Gastrocnemius medialis (tissue), 4 donors: ENCODE measurements at regions of chr9 and their contacts with region 1.

Region 1: GRCh38 chr9:134067904-134068743 is at the start of gene BRD3:
- DNase-seq: peak; percentile 74 to 84
- ATAC-seq: peak; percentile 80 to 84
- H3K4me3 ChIP-seq: peak within 1 kb of the TSS; percentile 60 to 89 (median 78)
- H3K27ac ChIP-seq: peak within 1 kb of the TSS; percentile 89 to 99 (median 98)
- H3K4me1 ChIP-seq: peaks cover 36 to 39% of the 10 kb centered on the region in 2 donors
- H3K27me3 ChIP-seq: no peaks in the 10 kb centered on the region
- CTCF ChIP-seq: no peak
- POLR2A ChIP-seq: peak; percentile 89 to 93
- total RNA-seq, gene BRD3: 10.8 to 21.5 (median 16.5) TPM

Region 2: DNA sequence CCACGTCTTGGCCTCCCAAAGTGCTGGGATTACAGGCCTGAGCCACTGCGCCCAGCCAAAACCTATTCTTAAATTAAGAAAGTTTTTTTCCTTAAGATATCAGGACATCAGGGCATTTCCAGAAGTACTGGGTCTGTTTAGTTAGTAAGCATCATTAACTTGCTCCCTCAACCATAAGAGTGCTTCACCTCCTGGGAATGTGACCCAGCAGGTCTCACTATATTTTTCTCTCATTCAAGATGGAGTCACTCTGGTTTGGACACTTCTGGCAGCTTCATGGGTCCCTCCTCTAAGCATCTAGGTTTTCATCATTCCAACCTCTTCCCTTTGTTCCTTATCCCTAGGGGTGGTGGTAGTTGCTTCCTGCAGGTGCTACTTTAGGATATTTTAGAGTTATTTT is 53.2 kb before region 1 on chr9:
- in situ Hi-C with region 1: no loop called
- intact Hi-C with region 1: no loop called
- DNase-seq: no peak
- ATAC-seq: no peak
- H3K4me3 ChIP-seq: no peak overlapping the region
- H3K27ac ChIP-seq: no peak overlapping the region
- H3K4me1 ChIP-seq: no peaks in the 10 kb centered on the region
- H3K27me3 ChIP-seq: no peaks in the 10 kb centered on the region
- CTCF ChIP-seq: no peak
- POLR2A ChIP-seq: no peak

Region 3: GRCh38 chr9:134024828-134025605 is 43.1 kb before region 1 on chr9 and contains the start of gene BRD3OS:
- in situ Hi-C with region 1: no loop called
- intact Hi-C with region 1: loop called (anchors 2 kb)
- DNase-seq: peak; percentile 95 to 96
- ATAC-seq: peak; percentile 99
- H3K4me3 ChIP-seq: peak within 1 kb of the TSS; percentile 63 to 93 (median 80)
- H3K27ac ChIP-seq: peak within 1 kb of the TSS; percentile 42 to 75 (median 68)
- H3K4me1 ChIP-seq: peaks cover 6 to 12% of the 10 kb centered on the region in 2 donors
- H3K27me3 ChIP-seq: no peaks in the 10 kb centered on the region
- CTCF ChIP-seq: no peak
- POLR2A ChIP-seq: no peak
- total RNA-seq, gene BRD3OS: 0.76 to 9.3 (median 5.8) TPM

Region 4: GRCh38 chr9:134049236-134049635 is 18.9 kb before region 1 on chr9:
- in situ Hi-C with region 1: no loop called
- intact Hi-C with region 1: loop called (anchors 2 kb)
- DNase-seq: peak; percentile 84 to 94
- ATAC-seq: peak; percentile 83 to 91
- H3K4me3 ChIP-seq: no peak overlapping the region
- H3K27ac ChIP-seq: peak overlapping the region; percentile 72 to 82 (median 78)
- H3K4me1 ChIP-seq: peaks cover 34 to 45% of the 10 kb centered on the region in 2 donors
- H3K27me3 ChIP-seq: no peaks in the 10 kb centered on the region
- CTCF ChIP-seq: no peak
- POLR2A ChIP-seq: no peak

Region 5: GRCh38 chr9:134099123-134099787 is 31.1 kb after region 1 on chr9:
- in situ Hi-C with region 1: no loop called
- intact Hi-C with region 1: no loop called
- DNase-seq: peak in 1 of 2 donors; percentile 30
- ATAC-seq: peak; percentile 56 to 81
- H3K4me3 ChIP-seq: no peak overlapping the region
- H3K27ac ChIP-seq: no peak overlapping the region
- H3K4me1 ChIP-seq: no peaks in the 10 kb centered on the region
- H3K27me3 ChIP-seq: peaks cover 0 to 7% (median 0%) of the 10 kb centered on the region in 3 donors
- CTCF ChIP-seq: peak; percentile 62 to 88 (median 87)
- POLR2A ChIP-seq: no peak

Region 6: DNA sequence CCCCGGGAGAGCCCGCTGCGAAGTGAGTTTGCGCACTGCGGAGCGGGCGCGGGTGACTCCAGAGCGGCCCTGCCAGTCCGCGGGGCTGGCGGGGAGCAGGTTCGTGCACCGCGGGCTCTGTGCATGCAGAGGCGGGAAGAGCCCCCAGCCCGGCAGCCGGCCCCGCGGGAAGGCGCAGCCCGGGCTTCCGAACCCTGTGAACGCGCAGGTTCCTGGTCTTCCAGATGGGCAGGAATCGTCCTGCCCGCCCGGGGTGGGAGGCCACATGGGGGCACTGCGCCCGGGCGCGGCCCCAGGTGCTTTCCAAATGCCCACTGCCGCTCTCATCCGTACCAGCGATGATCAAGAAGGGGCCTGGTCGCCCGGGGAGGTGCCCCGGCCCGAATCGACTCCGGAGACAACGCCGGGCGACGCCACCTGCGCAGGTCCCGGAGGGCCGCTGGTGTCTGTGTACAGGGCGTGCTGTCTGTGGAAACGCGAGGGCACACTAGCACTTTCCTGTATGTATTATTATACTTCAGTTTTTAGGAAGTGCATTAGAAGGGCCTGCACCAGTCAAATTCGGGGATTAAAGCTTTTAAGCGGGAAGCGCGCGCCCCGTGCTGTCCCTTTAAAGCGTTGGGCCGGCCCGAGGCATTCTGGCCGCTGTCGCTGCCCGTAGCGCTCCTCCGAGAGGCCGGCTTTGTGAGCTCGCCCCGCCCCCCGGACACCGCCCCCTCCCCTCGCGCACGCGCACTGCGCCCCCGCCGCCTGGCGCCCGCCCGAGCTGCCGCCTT is 67.4 kb after region 1 on chr9 and contains the start of gene WDR5:
- in situ Hi-C with region 1: no loop called
- intact Hi-C with region 1: loop called (anchors 1 kb)
- DNase-seq: peak; percentile 85 to 90
- ATAC-seq: peak; percentile 91 to 92
- H3K4me3 ChIP-seq: peak within 1 kb of the TSS; percentile 78 to 99 (median 89)
- H3K27ac ChIP-seq: peak within 1 kb of the TSS; percentile 86 to 97 (median 94)
- H3K4me1 ChIP-seq: peaks cover 37 to 58% of the 10 kb centered on the region in 2 donors
- H3K27me3 ChIP-seq: no peaks in the 10 kb centered on the region
- CTCF ChIP-seq: peak in 3 of 5 experiments; percentile 15 to 27 (median 26)
- POLR2A ChIP-seq: peak in 1 of 2 donors; percentile 51
- total RNA-seq, gene WDR5: 19.8 to 39.3 (median 31.9) TPM